ENCODE measurements at regions of chr2 and their contacts with region 1.

Region 1: GRCh38 chr2:43194121-43194869 is 32.1 kb downstream of the ZFP36L2 start:
- DNase-seq: no peak
- H3K4me3 ChIP-seq: no peak overlapping the region
- H3K27ac ChIP-seq: no peak overlapping the region
- H3K4me1 ChIP-seq: peaks cover 0 to 3% (median 1%) of the 10 kb centered on the region in 4 experiments; a peak in 4 of 7 replicates
- H3K27me3 ChIP-seq: no peaks in the 10 kb centered on the region
- CTCF ChIP-seq: no peak
- EP300 ChIP-seq: no peak
- POLR2A ChIP-seq: no peak
- RAD21 ChIP-seq: no peak

Region 2: DNA sequence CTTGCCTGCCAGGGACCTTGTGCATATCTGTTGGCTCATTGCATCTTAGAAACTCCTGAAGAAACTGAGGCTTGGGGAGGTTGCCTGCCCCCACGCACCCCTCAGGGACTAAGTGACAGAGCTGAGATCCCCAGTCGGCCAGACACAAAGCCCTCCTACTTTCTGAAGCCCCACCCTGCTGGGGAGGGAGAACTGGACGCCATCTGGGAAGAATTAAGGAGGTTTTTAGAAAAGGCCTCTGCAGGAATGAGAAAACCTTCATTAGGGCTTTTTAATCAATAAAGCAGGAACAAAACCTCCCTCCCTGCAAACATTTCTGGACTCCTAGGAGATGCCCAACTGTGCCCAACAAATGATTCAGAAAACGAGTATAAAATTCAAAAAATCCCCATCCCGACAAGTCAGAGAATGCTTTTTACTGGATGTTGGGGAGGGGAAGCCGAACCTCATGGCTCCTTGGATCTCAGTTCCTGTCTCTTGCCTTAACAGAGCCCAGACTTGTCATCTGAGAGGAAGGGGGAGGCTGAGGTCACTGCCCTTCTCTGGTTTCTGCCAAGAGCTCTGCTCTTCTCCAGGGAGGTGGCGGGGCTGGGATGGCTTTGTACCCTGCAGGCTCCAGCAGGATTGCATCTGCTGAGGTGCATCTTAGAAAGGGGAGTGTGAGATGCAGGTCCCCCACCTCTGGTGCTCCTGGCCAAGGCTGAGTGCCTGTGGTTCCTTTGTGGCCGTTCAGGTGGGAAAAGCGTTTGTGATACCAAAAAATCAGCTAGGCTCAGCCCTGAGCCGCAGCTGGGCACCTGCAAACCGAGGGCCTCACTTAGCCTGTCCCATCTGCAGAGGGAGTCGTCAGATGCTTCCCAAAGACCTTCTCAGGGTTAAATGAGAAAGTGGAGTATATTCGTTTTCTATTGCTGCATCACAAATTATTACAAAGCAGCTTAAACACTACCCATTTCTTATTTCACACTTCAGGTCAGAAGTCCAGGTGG is 110.3 kb before region 1 on chr2:
- CTCF ChIA-PET with region 1: no interaction called
- POLR2A ChIA-PET with region 1: no interaction called
- DNase-seq: no peak
- H3K4me3 ChIP-seq: no peak overlapping the region
- H3K27ac ChIP-seq: no peak overlapping the region
- H3K4me1 ChIP-seq: peaks cover 0 to 16% (median 8%) of the 10 kb centered on the region in 4 experiments; a peak in 5 of 7 replicates
- H3K27me3 ChIP-seq: no peaks in the 10 kb centered on the region
- CTCF ChIP-seq: no peak
- EP300 ChIP-seq: no peak
- POLR2A ChIP-seq: no peak
- RAD21 ChIP-seq: no peak

Region 3: DNA sequence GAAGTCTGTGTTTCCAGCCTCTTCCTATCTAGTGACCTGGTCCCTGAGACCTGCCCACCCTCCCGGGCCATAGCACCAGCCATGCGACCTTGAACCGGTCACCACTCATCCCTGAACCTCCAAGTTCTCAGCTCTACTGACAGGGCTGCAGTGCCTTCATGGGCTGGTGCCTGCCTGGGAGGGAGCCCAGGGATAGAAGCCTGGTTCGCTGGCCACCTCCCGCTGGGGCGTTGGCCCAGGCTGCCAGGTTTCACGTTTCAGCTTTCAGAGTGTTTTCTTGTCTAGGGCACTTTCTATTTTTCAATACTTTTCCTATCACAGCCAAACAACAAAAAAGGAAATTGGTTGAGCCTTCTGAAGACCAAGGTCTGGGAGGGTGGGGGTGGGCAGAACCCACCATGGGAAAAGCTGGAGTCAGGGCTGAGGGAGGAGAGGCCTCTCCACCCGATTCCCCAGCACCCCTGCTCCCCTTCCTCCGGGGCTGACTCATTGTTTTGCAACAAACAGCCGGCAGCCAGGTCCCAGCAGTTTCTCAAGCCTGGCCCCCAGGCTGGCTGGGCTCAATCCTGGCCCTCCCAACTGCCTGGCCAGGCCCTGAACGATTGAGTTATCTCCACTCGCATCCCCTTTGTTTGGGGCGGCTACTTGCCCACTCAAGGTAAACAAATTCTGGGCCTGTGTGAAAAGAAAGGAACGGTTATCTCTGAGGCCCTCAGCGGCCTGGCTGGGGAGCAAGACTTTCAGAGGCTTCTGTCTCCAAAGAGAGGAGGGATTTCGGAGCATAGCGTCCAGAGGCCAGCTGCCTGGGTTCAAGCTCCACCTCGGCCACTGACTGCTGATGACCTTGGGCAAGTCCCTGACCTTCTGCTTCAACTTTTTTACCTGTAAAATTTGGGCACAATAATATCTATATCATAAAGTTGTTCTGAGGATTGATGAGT is 15.4 kb before region 1 on chr2:
- CTCF ChIA-PET with region 1: interaction called, 43 read pairs
- POLR2A ChIA-PET with region 1: interaction called, 12 read pairs
- DNase-seq: peak; percentile 63 to 70
- H3K4me3 ChIP-seq: peak overlapping the region in 2 of 4 experiments; percentile 19 to 35; a peak in 4 of 8 replicates
- H3K27ac ChIP-seq: peak overlapping the region; percentile 80
- H3K4me1 ChIP-seq: peaks cover 13 to 32% (median 27%) of the 10 kb centered on the region in 4 experiments
- H3K27me3 ChIP-seq: no peaks in the 10 kb centered on the region
- CTCF ChIP-seq: no peak
- EP300 ChIP-seq: no peak
- POLR2A ChIP-seq: peak in 1 of 2 experiments; percentile 65; a peak in 1 of 3 replicates
- RAD21 ChIP-seq: no peak

Region 4: DNA sequence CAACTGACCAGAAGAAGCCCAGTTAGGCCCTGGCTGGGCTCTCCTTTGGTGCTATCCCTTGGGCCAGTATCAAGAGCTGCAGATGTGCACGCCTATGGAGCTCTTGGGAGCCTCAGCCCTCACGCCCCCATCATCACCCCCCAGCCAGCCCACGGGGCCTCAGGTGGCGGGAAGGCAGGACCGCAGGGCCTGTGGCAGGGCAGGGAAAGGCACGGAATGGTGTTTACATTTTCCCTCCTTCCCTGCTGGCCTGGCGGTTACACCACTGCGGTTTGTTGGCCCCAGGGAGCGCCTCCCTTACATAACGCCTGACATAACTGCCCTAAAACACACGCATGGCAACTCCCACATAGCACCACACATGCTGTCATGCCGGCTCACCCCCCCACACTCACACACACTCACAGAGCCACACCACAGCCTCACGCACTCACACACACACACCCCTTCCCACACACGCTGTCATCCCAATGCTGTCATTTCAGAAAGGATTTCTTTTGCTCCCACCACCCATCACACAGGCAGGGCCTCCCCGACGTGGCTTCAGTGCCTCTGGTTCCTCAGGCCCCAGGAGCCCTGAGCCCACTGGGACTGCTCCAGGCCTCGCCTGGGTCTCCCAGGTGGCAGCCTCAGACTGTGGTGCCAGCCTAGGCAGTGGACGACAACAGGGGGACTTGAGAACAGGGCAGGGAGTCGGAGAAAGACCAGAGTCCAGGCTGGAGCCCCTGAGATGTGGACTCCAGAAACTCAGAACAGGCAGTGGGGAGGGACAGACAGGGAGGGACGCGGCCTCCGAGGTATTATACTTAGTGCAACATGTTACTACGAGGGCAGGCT is 16.4 kb after region 1 on chr2:
- CTCF ChIA-PET with region 1: interaction called, 42 read pairs
- POLR2A ChIA-PET with region 1: interaction called, 5 read pairs
- DNase-seq: no peak
- H3K4me3 ChIP-seq: no peak overlapping the region
- H3K27ac ChIP-seq: no peak overlapping the region
- H3K4me1 ChIP-seq: peaks cover 0 to 12% (median 6%) of the 10 kb centered on the region in 4 experiments; a peak in 5 of 7 replicates
- H3K27me3 ChIP-seq: no peaks in the 10 kb centered on the region
- CTCF ChIP-seq: no peak
- EP300 ChIP-seq: no peak
- POLR2A ChIP-seq: no peak
- RAD21 ChIP-seq: no peak

Region 5: GRCh38 chr2:43219383-43220228 is 25.3 kb after region 1 on chr2:
- CTCF ChIA-PET with region 1: interaction called, 42 read pairs
- POLR2A ChIA-PET with region 1: no interaction called
- DNase-seq: peak in 1 of 2 experiments; percentile 76
- H3K4me3 ChIP-seq: peak overlapping the region; percentile 14 to 83 (median 34); a peak in 7 of 8 replicates
- H3K27ac ChIP-seq: peak overlapping the region; percentile 65; the same call in 1 of the 2 replicates
- H3K4me1 ChIP-seq: peaks cover 20 to 43% (median 25%) of the 10 kb centered on the region in 4 experiments
- H3K27me3 ChIP-seq: no peaks in the 10 kb centered on the region
- CTCF ChIP-seq: no peak
- EP300 ChIP-seq: no peak
- POLR2A ChIP-seq: no peak
- RAD21 ChIP-seq: no peak